ENCODE measurements at regions of chr1 and their contacts with region 1.

Region 1: DNA sequence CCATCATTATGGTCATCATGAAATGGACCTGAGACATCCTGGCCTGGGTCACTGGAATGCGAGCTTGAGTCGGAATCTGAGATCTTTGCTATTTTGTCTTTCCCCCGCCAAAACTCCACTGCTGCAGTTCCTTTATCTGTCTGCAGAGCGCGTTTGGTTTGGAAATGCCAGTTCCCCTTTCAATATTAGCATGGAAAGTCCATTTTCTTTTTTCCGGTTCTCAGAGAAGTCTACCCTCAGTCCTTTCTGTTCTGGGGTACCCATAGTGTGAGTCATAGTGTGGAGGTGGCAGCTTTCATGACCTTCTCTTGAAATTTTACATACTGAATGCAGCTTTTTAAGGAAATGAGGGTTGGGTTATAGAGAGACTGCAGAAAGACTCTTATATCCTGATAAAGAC is 14.6 kb downstream of the CACNA1E start:
- DNase-seq: no peak
- ATAC-seq: no peak
- H3K4me3 ChIP-seq: no peak overlapping the region
- H3K27ac ChIP-seq: no peak overlapping the region
- H3K4me1 ChIP-seq: peaks cover 0 to 6% (median 0%) of the 10 kb centered on the region in 12 donors
- H3K27me3 ChIP-seq: peaks cover 0 to 77% (median 6%) of the 10 kb centered on the region in 9 donors
- CTCF ChIP-seq: no peak
- POLR2A ChIP-seq: no peak

Region 2: DNA sequence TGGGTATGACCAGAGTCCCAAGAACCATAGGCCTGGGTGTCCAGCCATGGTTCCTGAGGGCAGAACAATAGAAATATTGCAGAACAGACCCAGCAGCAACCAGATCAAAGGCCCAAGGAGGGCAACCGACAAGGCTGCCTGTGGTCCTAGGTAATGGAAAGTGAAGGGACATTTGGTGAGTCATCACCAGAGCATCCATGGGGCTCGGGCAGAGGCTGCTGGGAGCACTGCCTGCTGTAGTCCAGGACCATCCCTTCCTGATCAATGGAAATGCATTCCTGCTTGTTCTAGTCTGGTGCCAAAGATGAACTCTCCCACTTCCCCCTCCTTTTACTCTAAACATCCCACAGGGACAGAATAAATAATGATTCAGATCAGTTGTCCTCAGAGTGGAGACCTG is 187.3 kb before region 1 on chr1:
- intact Hi-C with region 1: no loop called
- DNase-seq: no peak
- ATAC-seq: no peak
- H3K4me3 ChIP-seq: no peak overlapping the region
- H3K27ac ChIP-seq: no peak overlapping the region
- H3K4me1 ChIP-seq: no peaks in the 10 kb centered on the region
- H3K27me3 ChIP-seq: peaks cover 0 to 55% (median 11%) of the 10 kb centered on the region in 9 donors
- CTCF ChIP-seq: no peak
- POLR2A ChIP-seq: no peak

Region 3: GRCh38 chr1:182069028-182069466 is 571.2 kb after region 1 on chr1:
- intact Hi-C with region 1: loop called in 1 of 10 experiments (anchors 10 kb)
- DNase-seq: peak in 4 of 5 donors; percentile 35 to 55 (median 43)
- ATAC-seq: peak in 3 of 4 donors; percentile 71 to 85 (median 75)
- H3K4me3 ChIP-seq: no peak overlapping the region
- H3K27ac ChIP-seq: no peak overlapping the region
- H3K4me1 ChIP-seq: peaks cover 0 to 4% (median 0%) of the 10 kb centered on the region in 12 donors
- H3K27me3 ChIP-seq: peaks cover 0 to 21% (median 0%) of the 10 kb centered on the region in 9 donors
- CTCF ChIP-seq: peak; percentile 42 to 79 (median 67)
- POLR2A ChIP-seq: no peak